Activated T-helper 2 cell treated with anti-CD3 and anti-CD28 coated beads, Interferon-gamma antibody, Interleukin-2, Interleukin-4, amounts not matched to agents 10 μg/mL and 5 μg/mL and 100 μg/mL, durations not matched to agents 14 hours and 24 hours and 36 hours (primary cell): ENCODE measurements at regions of chr4 and their contacts with region 1.

Region 1: GRCh38 chr4:174222266-174222872 is 61.1 kb downstream of the FBXO8 start:
- DNase-seq: no peak
- H3K4me3 Mint-ChIP-seq: no peak overlapping the region
- H3K27ac Mint-ChIP-seq: no peak overlapping the region
- H3K4me1 Mint-ChIP-seq: peaks cover 10% of the 10 kb centered on the region
- H3K27me3 Mint-ChIP-seq: peaks cover 58% of the 10 kb centered on the region

Region 2: GRCh38 chr4:173516621-173517524 is 705.5 kb before region 1 on chr4:
- intact Hi-C with region 1: loop called (anchors 2 kb)
- DNase-seq: no peak
- H3K4me3 Mint-ChIP-seq: no peak overlapping the region
- H3K27ac Mint-ChIP-seq: no peak overlapping the region
- H3K4me1 Mint-ChIP-seq: no peaks in the 10 kb centered on the region
- H3K27me3 Mint-ChIP-seq: peaks cover 92% of the 10 kb centered on the region

Region 3: DNA sequence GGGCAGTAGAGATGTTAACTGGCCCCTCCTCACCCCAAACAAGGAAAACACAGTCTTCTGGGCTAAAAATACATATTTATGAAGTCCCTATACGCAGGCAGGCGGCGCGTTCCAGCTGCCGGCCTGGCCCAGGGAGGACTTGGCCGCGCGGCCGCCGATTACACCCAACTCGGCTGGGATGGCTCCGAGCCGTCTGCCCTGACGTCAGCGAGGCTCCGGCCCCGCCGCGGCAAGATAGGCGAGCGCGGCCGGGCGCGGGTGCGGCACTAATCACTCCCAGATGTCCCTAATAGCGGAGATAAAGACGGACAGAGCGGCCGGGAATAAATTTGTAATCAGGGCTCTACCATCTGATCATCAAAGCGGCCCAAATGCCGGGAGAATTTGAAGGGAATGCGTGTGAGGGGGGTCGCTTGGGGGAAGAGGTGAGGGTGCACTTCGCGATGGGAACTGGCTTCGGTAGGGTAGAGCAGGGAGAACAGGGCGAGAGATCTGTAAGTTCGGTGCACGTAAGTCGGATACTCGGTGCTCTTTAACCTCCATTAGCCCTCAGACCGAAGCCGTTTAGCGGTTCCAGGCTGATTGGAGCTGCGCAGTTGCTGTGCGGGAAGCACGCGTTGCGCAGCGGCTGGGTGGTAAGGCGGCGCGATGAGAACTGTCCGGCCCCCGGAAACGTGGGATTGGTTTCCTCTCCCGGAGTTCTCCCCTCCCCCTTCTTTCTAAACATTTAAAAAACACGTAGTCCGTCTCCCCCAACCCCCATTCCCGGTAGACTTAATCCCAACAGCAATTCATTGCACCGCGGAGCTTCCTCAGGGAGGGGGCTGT is 700.0 kb before region 1 on chr4:
- intact Hi-C with region 1: loop called (anchors 2 kb)
- DNase-seq: no peak
- H3K4me3 Mint-ChIP-seq: no peak overlapping the region
- H3K27ac Mint-ChIP-seq: no peak overlapping the region
- H3K4me1 Mint-ChIP-seq: no peaks in the 10 kb centered on the region
- H3K27me3 Mint-ChIP-seq: peaks cover 91% of the 10 kb centered on the region

Region 4: GRCh38 chr4:174260099-174260498 is 37.7 kb after region 1 on chr4:
- intact Hi-C with region 1: no loop called
- DNase-seq: no peak
- H3K4me3 Mint-ChIP-seq: no peak overlapping the region
- H3K27ac Mint-ChIP-seq: no peak overlapping the region
- H3K4me1 Mint-ChIP-seq: no peaks in the 10 kb centered on the region
- H3K27me3 Mint-ChIP-seq: no peaks in the 10 kb centered on the region

Region 5: DNA sequence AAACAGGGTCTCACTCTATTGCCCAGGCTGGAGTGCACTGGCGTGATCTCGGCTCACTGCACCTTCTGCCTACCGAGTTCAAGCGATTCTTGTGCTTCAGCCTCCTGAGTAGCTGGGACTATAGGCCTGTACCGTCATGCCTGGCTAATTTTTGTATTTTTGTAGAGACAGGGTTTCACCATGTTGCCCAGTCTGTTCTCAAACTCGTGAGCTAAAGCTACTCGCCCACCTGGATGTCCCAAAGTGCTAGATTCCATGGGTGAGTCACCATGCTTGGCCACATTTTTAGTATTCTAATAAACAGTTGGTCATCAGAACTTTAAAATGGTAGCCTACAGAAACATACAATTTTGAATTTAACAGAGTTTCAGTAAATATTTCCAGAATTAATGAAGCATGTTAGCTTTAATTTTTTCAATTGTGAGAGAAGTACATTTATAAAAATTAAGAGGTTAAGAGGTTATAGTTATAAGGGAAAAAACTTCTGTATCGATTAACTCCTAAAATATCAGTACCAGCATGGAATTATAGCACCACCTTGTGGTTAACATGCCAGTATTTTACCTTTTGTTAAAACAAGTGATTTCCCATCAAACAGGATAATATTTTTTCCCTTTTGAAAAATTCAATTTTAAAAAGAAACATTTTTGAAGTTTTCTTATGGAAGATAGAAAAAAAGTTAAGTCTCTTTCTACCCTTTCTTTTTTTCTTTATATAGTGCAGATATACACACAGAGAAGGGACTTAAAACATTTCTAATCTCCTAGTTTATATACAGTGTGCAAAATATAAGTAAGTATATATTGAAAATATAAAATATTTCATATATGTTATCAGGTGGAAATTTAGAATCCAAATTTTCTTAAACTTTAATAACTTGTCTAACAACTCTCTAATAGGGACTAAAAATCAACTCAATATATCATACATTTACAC is 96.7 kb after region 1 on chr4:
- intact Hi-C with region 1: loop called (anchors 1 kb)
- DNase-seq: no peak
- H3K4me3 Mint-ChIP-seq: no peak overlapping the region
- H3K27ac Mint-ChIP-seq: no peak overlapping the region
- H3K4me1 Mint-ChIP-seq: no peaks in the 10 kb centered on the region
- H3K27me3 Mint-ChIP-seq: no peaks in the 10 kb centered on the region

Region 6: GRCh38 chr4:174522183-174523048 is 300.0 kb after region 1 on chr4 and contains the start of gene HPGD:
- intact Hi-C with region 1: loop called (anchors 10 kb)
- DNase-seq: peak; percentile 47
- H3K4me3 Mint-ChIP-seq: peak within 1 kb of the TSS; percentile 77
- H3K27ac Mint-ChIP-seq: no peak within 1 kb of the TSS
- H3K4me1 Mint-ChIP-seq: peaks cover 12% of the 10 kb centered on the region
- H3K27me3 Mint-ChIP-seq: peaks cover 68% of the 10 kb centered on the region
- total RNA-seq, gene HPGD: 0.48 and 1.2 TPM in 2 replicates

Region 7: GRCh38 chr4:174631901-174632758 is 409.8 kb after region 1 on chr4:
- intact Hi-C with region 1: loop called (anchors 5 kb)
- DNase-seq: no peak
- H3K4me3 Mint-ChIP-seq: no peak overlapping the region
- H3K27ac Mint-ChIP-seq: no peak overlapping the region
- H3K4me1 Mint-ChIP-seq: peaks cover 5% of the 10 kb centered on the region
- H3K27me3 Mint-ChIP-seq: no peaks in the 10 kb centered on the region

Region 8: DNA sequence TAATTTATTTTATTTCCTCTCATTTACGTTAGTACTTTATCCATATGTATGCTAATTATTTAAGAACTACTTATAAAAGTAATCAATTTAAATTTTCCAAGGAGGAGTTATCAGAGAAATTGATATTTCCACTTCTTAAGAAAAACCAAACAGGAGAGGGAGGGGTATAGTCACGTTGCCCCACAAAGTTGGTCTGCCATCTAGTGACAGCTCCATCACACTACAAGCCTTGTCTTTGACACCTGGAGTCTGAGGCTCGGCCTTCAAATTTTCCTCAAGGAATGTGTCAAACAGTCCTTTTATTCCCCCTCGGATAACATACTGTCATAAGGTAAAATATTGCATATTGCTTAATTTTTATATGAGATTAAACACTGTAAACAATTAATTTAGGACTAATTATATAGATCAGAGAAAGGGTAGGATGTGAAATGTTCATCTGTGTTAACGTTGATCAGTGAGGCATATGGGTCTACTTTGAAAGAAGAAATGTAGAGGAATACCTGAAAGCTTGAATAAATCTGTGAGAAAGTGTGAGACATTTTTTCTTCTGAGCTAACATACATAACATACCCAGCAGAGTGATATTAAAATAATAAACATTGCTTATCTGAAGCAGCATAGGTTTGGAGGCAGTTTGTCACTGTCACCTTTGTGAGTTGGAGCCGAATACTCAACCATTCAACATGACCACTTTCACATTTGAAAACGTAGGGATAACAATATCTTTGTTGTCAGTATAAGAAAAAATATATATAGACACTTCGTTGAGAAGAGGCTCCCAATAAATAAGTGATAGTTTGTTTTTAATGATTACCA is 492.2 kb after region 1 on chr4:
- intact Hi-C with region 1: loop called (anchors 10 kb)
- DNase-seq: no peak
- H3K4me3 Mint-ChIP-seq: no peak overlapping the region
- H3K27ac Mint-ChIP-seq: no peak overlapping the region
- H3K4me1 Mint-ChIP-seq: no peaks in the 10 kb centered on the region
- H3K27me3 Mint-ChIP-seq: no peaks in the 10 kb centered on the region